Naive thymus-derived CD8-positive, alpha-beta T cell (primary cell): ENCODE measurements at regions of chr16 and their contacts with region 1.

Region 1: GRCh38 chr16:352547-353403 is at the start of gene AXIN1:
- DNase-seq: peak; percentile 94 to 100 (median 100)
- ATAC-seq: peak; percentile 69 to 78
- H3K4me3 Mint-ChIP-seq: peak within 1 kb of the TSS; percentile 81 to 98 (median 92)
- H3K27ac Mint-ChIP-seq: peak within 1 kb of the TSS in 9 of 10 donors; percentile 85 to 97 (median 96)
- H3K4me1 Mint-ChIP-seq: peaks cover 20 to 71% (median 55%) of the 10 kb centered on the region in 4 donors
- H3K27me3 Mint-ChIP-seq: no peaks in the 10 kb centered on the region
- polyA plus RNA-seq, gene AXIN1: 1.6 to 4.1 (median 2.2) TPM

Region 2: DNA sequence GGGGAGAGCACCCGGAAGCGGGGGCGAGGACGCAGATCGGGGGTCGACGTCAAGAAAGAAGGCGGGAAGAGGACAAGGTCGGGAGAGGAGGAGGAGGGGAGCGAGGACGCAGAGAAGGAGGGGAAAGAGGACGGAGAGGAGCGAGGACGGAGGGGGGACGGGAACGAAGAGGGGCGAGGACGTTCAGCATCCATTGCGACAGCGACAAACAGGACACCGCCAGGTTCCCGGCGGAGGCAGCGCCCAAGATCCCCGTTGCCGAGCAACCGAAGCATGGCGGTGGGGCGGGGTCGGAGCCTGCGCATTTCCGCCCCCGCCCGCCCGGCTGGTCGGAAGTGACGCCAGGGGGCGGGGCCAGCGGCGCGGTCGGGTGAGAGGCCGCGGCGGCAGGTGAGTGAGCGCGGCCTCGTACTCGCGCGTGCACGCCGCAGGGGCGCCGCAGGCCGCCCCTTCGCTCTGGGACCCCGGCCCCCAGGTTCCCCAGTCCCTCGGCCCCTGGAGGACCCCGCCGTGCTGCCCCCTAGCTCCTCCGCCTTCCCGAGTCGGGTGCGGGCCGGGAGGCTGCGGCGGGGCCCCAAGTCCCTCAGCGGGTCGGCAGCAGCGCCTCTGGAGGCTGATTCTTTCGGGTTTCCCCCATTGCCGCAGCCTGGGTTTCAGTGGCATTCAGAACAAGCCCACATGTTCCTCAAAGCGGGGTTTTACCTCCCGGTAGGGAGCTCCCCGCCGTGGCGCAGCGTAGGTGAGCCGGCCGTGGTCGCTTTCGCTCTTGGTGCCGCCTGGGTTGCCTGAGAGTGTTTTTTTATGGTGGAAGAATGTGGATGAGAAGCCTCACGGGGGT is 118.1 kb before region 1 on chr16 and contains the start of gene FAM234A:
- POLR2A ChIA-PET with region 1: interaction called, 23 read pairs
- DNase-seq: peak; percentile 90 to 99 (median 96)
- ATAC-seq: peak; percentile 86 to 90
- H3K4me3 Mint-ChIP-seq: peak within 1 kb of the TSS; percentile 90 to 99 (median 96)
- H3K27ac Mint-ChIP-seq: peak within 1 kb of the TSS; percentile 94 to 100 (median 100)
- H3K4me1 Mint-ChIP-seq: peaks cover 11 to 21% (median 17%) of the 10 kb centered on the region in 4 donors
- H3K27me3 Mint-ChIP-seq: no peaks in the 10 kb centered on the region
- polyA plus RNA-seq, gene FAM234A: 18.8 to 46.4 (median 34.4) TPM

Region 3: DNA sequence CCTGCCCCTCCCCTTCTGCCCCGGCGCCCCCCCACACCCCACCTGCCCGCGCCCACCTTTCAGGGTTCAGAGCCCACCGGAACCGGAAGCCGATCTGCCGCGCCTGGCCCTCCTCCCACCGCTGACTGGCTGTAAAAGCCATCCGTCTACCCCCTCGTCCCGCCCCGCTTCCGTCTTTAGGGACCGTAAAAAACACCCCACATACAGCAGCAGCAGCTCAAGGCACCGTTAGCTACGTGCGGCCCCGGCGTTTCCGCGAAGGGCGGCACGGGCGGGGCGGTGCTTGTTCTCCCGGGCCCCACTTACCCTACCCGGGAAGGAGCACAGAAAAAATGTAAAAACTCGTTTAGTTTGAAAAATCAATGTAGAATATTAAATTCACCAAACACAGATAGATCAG is 17.7 kb after region 1 on chr16 and contains the start of gene MRPL28:
- POLR2A ChIA-PET with region 1: interaction called, 14 read pairs
- DNase-seq: peak; percentile 83 to 97 (median 92)
- ATAC-seq: peak; percentile 99
- H3K4me3 Mint-ChIP-seq: peak within 1 kb of the TSS; percentile 82 to 97 (median 90)
- H3K27ac Mint-ChIP-seq: peak within 1 kb of the TSS; percentile 85 to 96 (median 89)
- H3K4me1 Mint-ChIP-seq: peaks cover 5 to 24% (median 15%) of the 10 kb centered on the region in 4 donors
- H3K27me3 Mint-ChIP-seq: no peaks in the 10 kb centered on the region
- polyA plus RNA-seq, gene MRPL28: 57.4 to 66.6 (median 64.7) TPM

Region 4: GRCh38 chr16:381789-382717 is 29.3 kb after region 1 on chr16 and contains the start of gene PGAP6:
- POLR2A ChIA-PET with region 1: interaction called, 22 read pairs
- DNase-seq: peak; percentile 21 to 79 (median 64)
- ATAC-seq: peak; percentile 46 to 55
- H3K4me3 Mint-ChIP-seq: peak within 1 kb of the TSS; percentile 87 to 96 (median 93)
- H3K27ac Mint-ChIP-seq: peak within 1 kb of the TSS; percentile 80 to 97 (median 90)
- H3K4me1 Mint-ChIP-seq: peaks cover 10 to 31% (median 27%) of the 10 kb centered on the region in 4 donors
- H3K27me3 Mint-ChIP-seq: no peaks in the 10 kb centered on the region
- polyA plus RNA-seq, gene PGAP6: 19.5 to 38.1 (median 22.0) TPM

Region 5: GRCh38 chr16:401468-402348 is 48.9 kb after region 1 on chr16 and contains the start of gene DECR2:
- POLR2A ChIA-PET with region 1: interaction called, 24 read pairs
- DNase-seq: peak; percentile 90 to 100 (median 96)
- ATAC-seq: peak; percentile 78
- H3K4me3 Mint-ChIP-seq: peak within 1 kb of the TSS; percentile 85 to 95 (median 90)
- H3K27ac Mint-ChIP-seq: peak within 1 kb of the TSS; percentile 68 to 98 (median 96)
- H3K4me1 Mint-ChIP-seq: peaks cover 6 to 21% (median 17%) of the 10 kb centered on the region in 4 donors
- H3K27me3 Mint-ChIP-seq: no peaks in the 10 kb centered on the region
- polyA plus RNA-seq, gene DECR2: 7.4 to 12.2 (median 8.5) TPM